Mammary epithelial cell (primary cell): ENCODE measurements at regions of chr9 and their contacts with region 1.

Region 1: DNA sequence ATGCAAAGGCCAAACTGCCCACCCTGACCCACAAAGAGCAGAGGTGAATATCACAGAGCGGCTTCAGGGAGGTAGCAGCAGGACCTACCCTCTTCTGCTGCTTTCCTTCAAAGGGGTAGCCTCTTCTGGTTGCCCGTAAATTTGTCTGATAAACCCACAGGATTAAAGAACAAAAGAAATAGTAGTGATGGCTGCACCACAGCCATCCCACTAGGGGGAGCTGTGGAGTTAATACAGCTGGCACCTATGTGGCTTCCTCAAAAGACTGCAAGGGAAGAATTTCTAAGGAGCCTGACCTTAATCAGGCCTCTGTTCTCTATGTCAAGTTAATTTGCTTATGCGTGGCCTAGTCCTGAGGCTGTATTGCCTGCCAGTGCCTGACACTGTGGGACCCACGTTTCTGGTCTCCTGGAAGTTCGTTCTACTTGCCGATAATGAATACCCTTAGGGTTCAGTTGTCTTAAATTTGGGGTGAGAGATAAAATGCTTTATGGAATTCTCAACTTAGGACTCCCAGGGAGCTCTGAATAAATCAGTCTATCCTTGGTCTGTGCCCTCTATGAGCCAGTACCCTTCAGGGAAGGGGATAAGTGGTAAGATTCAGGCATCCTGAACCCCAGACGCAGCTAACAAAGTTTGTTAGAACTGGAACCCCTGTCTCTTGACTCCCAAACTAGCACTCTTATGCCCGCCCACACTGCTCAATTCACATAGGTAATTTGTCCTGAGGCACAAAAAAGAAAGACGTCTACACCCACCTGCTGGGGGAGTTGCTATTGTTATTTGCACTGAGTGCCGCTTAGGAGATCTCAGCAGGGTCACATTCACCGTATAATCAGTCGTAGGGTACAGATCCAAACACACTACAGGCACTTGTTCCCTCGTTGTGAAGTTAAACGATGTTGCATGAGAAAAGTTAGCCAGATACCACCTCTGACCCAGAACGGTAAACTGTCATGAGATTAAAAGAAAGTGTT is 77.1 kb downstream of the SUSD1 start:
- DNase-seq: peak; percentile 55
- H3K4me3 ChIP-seq: no peak overlapping the region
- H3K27ac ChIP-seq: no peak overlapping the region
- H3K4me1 ChIP-seq: no peaks in the 10 kb centered on the region
- H3K27me3 ChIP-seq: no peaks in the 10 kb centered on the region
- CTCF ChIP-seq: peak; percentile 83 to 86

Region 2: GRCh38 chr9:112348257-112349007 is 250.4 kb after region 1 on chr9:
- CTCF ChIA-PET with region 1: interaction called, 10 read pairs
- dilution Hi-C with region 1: no loop called
- in situ Hi-C with region 1: no loop called
- intact Hi-C with region 1: no loop called
- DNase-seq: peak; percentile 56
- H3K4me3 ChIP-seq: peak overlapping the region; percentile 8 to 43 (median 30)
- H3K27ac ChIP-seq: no peak overlapping the region
- H3K4me1 ChIP-seq: no peaks in the 10 kb centered on the region
- H3K27me3 ChIP-seq: no peaks in the 10 kb centered on the region
- CTCF ChIP-seq: no peak

Region 3: GRCh38 chr9:112711050-112711689 is 613.2 kb after region 1 on chr9:
- CTCF ChIA-PET with region 1: no interaction called
- dilution Hi-C with region 1: no loop called
- in situ Hi-C with region 1: no loop called
- intact Hi-C with region 1: loop called (anchors 5 kb)
- DNase-seq: peak; percentile 13
- H3K4me3 ChIP-seq: no peak overlapping the region
- H3K27ac ChIP-seq: no peak overlapping the region
- H3K4me1 ChIP-seq: peaks cover under 1% of the 10 kb centered on the region
- H3K27me3 ChIP-seq: no peaks in the 10 kb centered on the region
- CTCF ChIP-seq: peak; percentile 47 to 64